ENCODE measurements at regions of chr3 and their contacts with region 1.

Region 1: DNA sequence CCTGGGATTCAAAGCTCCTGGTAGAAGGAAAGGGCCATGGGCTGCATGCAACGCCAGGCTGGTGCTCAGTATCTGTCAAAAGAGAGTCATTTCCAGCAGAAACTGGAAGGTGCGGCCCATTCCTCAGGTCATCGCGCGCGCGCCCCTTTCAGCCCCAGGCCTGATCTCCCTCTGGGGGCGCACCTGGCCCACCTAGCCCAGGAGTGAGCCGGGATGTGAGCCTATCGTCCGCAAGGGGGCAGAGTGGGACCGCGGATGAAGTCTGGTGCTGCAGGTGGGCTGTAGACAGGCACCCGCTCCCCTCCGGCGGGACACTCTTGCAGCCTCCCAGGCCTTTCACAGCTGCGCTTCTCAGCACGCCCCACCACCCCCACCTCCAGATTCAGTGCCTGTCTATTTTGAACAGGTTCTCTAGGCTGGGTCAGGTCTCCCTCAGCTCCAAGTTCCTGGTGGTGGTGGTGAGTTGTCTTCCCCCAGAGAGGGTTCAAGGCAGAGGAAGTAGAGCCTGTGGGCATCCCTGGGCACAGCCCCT is 5.8 kb upstream of the RPL29 start:
- DNase-seq: peak; percentile 85 to 94
- ATAC-seq: peak; percentile 91 to 99 (median 99)
- H3K4me3 ChIP-seq: no peak overlapping the region
- H3K4me3 Mint-ChIP-seq: no peak overlapping the region
- H3K27ac ChIP-seq: no peak overlapping the region
- H3K27ac Mint-ChIP-seq: no peak overlapping the region
- H3K4me1 ChIP-seq: peaks cover 17% of the 10 kb centered on the region
- H3K4me1 Mint-ChIP-seq: peaks cover 0 to 8% of the 10 kb centered on the region in 2 donors
- H3K27me3 ChIP-seq: no peaks in the 10 kb centered on the region
- H3K27me3 Mint-ChIP-seq: peaks cover 0 to 4% of the 10 kb centered on the region in 2 donors
- CTCF ChIP-seq: peak; percentile 93

Region 2: DNA sequence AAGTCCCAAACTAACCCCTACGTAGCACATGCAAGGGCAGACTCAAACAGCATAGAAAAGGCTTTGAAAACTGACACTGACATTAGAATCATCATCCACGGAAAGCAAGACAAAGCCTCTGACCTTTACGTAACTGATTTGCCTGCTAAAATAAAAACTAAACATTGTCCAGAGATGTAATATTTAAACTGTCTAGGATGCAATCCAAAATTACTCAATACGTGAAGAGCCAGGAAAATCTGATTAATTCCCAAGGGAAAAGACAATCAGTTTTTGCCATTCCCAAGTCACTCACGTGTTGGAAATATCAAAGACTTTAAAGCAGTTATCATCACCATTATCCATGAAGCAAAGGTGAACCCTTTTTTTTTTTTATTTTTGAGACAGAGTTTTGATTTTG is 85.1 kb before region 1 on chr3:
- intact Hi-C with region 1: no loop called
- DNase-seq: no peak
- ATAC-seq: no peak
- H3K4me3 ChIP-seq: no peak overlapping the region
- H3K4me3 Mint-ChIP-seq: no peak overlapping the region
- H3K27ac ChIP-seq: no peak overlapping the region
- H3K27ac Mint-ChIP-seq: no peak overlapping the region
- H3K4me1 ChIP-seq: no peaks in the 10 kb centered on the region
- H3K4me1 Mint-ChIP-seq: no peaks in the 10 kb centered on the region
- H3K27me3 ChIP-seq: no peaks in the 10 kb centered on the region
- H3K27me3 Mint-ChIP-seq: peaks cover 4 to 21% of the 10 kb centered on the region in 2 donors
- CTCF ChIP-seq: no peak

Region 3: DNA sequence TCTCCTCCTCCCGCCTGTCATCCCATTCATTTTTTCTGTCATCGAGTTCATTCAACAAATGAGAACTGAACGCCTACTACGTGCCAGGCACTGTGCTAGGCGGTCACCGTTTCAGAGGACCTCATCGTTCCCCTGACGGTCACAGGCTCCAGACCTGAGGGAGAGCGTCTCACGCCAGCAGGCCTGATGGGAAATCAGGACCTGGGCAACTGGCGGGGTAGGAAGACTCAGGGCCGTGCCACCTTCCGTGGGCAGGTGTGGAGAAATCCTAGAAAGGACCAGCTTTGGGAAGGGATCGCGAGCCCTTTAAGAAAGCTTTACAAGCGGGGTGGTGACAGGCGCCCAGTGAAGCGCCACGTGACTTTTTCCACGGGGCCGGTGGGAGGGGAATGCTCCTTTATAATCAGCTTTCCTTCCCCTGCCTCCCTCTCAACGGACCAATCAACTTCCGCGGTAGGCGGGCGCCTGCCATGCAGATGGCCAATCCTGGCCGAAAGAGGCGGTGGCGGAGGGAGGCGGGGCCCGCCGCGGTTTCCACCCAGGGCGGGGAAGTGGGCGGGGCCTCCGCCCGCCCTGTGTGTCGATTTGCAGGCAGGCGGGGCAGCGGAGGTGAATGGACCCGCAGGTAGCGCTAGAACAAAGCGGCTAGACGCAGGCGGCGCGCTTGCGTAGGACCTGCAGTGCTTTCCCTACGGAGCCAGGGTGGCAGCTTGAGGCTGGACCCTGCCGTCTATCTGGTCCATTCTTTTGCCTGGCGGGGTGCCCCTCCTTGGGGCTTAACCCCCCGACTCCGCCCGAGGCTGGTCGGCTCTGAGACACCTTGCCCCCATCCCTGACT is 55.7 kb after region 1 on chr3:
- intact Hi-C with region 1: loop called (anchors 5 kb)
- DNase-seq: peak; percentile 97 to 99
- ATAC-seq: peak; percentile 84 to 93 (median 87)
- H3K4me3 ChIP-seq: peak overlapping the region; percentile 49
- H3K4me3 Mint-ChIP-seq: peak overlapping the region; percentile 93
- H3K27ac ChIP-seq: peak overlapping the region; percentile 73
- H3K27ac Mint-ChIP-seq: peak overlapping the region; percentile 92 to 93
- H3K4me1 ChIP-seq: peaks cover 56% of the 10 kb centered on the region
- H3K4me1 Mint-ChIP-seq: peaks cover 38 to 43% of the 10 kb centered on the region in 2 donors
- H3K27me3 ChIP-seq: no peaks in the 10 kb centered on the region
- H3K27me3 Mint-ChIP-seq: peaks cover 0 to 2% of the 10 kb centered on the region in 2 donors
- CTCF ChIP-seq: no peak

Region 4: GRCh38 chr3:52070724-52071621 is 69.5 kb after region 1 on chr3:
- intact Hi-C with region 1: no loop called
- DNase-seq: no peak
- ATAC-seq: peak; percentile 41 to 81 (median 75)
- H3K4me3 ChIP-seq: no peak overlapping the region
- H3K4me3 Mint-ChIP-seq: no peak overlapping the region
- H3K27ac ChIP-seq: peak overlapping the region; percentile 44
- H3K27ac Mint-ChIP-seq: peak overlapping the region; percentile 56 to 68
- H3K4me1 ChIP-seq: peaks cover 31% of the 10 kb centered on the region
- H3K4me1 Mint-ChIP-seq: peaks cover 11 to 13% of the 10 kb centered on the region in 2 donors
- H3K27me3 ChIP-seq: no peaks in the 10 kb centered on the region
- H3K27me3 Mint-ChIP-seq: no peaks in the 10 kb centered on the region
- CTCF ChIP-seq: no peak

Region 5: DNA sequence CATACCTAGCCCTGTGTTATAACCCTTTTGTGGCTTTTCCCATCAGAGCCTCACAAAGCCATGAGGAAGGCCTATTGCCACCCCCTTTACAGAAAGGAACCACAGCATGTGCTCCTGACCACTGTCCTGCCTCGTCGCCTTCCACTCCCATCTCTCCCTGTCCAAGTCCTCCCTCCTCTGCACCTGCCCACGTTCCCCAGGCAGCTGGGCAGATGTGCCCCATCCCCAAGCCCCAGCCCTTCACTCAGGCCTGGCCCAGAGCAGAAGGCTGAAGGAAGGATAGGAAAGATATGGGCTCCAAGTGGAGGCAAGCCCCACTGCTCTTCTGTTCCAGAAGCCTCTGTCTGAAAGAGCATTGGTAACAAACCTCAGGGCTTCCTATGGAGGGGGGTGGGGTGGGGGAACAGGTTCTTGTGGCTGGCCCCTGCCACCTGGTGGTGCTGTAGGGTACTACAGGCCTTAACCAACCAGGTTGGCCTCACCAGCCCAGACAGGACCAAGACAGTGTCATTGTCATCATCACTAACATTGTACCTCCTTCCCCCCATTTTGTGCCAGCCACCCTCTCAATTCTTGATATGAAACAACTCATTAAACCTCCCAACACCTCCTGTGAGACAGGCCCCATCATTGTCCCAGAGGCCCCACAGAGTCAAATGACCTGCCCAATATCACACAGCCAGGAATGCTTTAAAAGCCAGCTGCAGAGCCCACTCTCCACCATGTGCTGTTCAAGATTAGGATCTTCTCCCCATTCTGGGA is 142.7 kb after region 1 on chr3:
- intact Hi-C with region 1: loop called (anchors 1 kb)
- DNase-seq: peak; percentile 82 to 93
- ATAC-seq: peak; percentile 94 to 100 (median 99)
- H3K4me3 ChIP-seq: no peak overlapping the region
- H3K4me3 Mint-ChIP-seq: no peak overlapping the region
- H3K27ac ChIP-seq: no peak overlapping the region
- H3K27ac Mint-ChIP-seq: peak overlapping the region in 1 of 2 donors; percentile 77
- H3K4me1 ChIP-seq: peaks cover 7% of the 10 kb centered on the region
- H3K4me1 Mint-ChIP-seq: peaks cover 6 to 7% of the 10 kb centered on the region in 2 donors
- H3K27me3 ChIP-seq: no peaks in the 10 kb centered on the region
- H3K27me3 Mint-ChIP-seq: no peaks in the 10 kb centered on the region
- CTCF ChIP-seq: peak; percentile 88

Region 6: DNA sequence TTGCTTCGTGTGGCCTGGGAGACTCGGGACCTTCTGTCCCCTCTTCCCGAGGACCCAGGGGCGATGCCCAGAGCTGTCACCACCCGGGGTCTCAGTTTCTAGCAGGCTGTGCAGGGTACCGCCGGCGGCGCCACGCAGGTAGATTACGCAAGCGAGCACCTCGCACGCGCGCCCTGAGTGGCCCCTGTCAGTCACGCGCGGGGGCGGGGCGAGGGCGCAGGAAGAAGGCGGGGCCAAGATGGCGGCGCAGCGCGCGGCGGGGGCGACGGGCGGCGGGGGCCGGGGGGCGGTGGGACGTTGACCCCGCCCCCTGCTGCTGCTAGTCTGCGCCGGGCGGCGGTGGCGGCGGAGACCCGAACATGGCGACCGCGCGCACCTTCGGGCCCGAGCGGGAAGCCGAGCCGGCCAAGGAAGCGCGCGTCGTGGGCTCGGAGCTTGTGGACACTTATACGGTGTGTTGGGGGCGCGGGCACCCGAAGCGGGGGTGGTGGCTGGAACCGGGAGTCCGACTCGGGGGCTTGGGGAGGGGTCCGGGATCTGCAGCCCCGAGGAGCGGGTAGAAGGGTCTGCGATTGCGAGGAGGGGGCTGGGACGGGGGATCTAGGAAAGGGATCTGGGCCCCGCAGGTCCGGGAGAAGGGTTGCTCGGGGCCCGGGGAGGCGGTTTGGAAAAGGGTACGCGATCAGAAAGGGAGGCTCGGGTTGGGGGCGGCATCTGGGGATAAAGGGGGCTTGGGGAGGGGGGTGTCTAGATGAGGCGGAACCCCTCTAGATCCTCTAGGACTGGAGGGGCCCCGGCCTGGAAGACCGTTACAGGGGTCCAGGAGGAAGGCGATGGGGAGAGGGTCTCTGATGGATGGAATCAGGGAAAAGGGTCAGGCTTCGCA is 454.0 kb after region 1 on chr3 and contains the start of gene NISCH:
- intact Hi-C with region 1: no loop called
- DNase-seq: peak; percentile 97
- ATAC-seq: peak; percentile 81 to 93 (median 87)
- H3K4me3 ChIP-seq: peak within 1 kb of the TSS; percentile 93
- H3K4me3 Mint-ChIP-seq: peak within 1 kb of the TSS; percentile 96
- H3K27ac ChIP-seq: peak within 1 kb of the TSS; percentile 90
- H3K27ac Mint-ChIP-seq: peak within 1 kb of the TSS; percentile 95 to 96
- H3K4me1 ChIP-seq: peaks cover 52% of the 10 kb centered on the region
- H3K4me1 Mint-ChIP-seq: peaks cover 46 to 50% of the 10 kb centered on the region in 2 donors
- H3K27me3 ChIP-seq: no peaks in the 10 kb centered on the region
- H3K27me3 Mint-ChIP-seq: no peaks in the 10 kb centered on the region
- CTCF ChIP-seq: no peak
- total RNA-seq, gene NISCH: 162 to 191 (median 175) TPM